IMR-90 (cell line): ENCODE measurements at regions of chr22 and their contacts with region 1.

Region 1: DNA sequence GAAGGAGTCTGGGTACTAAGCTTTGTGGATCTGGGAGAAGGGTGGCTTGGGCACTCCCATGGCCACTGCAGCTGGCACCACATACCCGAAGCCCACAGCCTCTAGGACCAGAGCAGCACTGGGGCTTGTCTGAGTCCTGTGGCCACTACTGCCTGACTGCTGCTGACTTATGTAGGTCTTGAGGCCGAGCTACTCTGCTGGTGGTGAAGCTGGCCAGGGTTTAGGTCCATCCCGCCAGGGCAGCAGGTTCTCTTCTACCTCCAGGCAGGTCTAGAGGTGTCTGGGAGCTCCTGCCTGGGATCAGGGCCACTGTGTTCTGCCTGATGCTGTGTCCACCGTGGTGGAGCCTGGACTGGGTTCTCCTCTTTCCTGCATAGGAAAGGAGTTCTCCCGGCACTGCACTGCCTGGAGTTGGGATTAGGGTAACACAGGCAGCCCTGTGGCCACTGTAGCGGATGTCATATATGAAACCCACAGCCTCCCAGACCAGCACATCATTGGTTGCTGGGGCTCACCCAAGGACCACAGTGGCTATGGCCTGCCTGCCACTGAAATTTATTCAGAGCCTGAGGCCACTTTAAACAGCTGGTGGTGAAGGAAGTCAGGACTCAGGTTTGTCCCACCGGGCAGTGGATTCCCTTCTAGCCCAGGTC is 109.8 kb upstream of the SERPIND1 start:
- DNase-seq: no peak
- ATAC-seq: no peak
- H3K4me3 ChIP-seq: no peak overlapping the region
- H3K27ac ChIP-seq: no peak overlapping the region
- H3K4me1 ChIP-seq: peaks cover 1% of the 10 kb centered on the region; the same call in 1 of the 2 replicates
- H3K27me3 ChIP-seq: peaks cover 1% of the 10 kb centered on the region; the same call in 1 of the 2 replicates
- CTCF ChIP-seq: no peak
- POLR2A ChIP-seq: no peak
- RAD21 ChIP-seq: no peak

Region 2: DNA sequence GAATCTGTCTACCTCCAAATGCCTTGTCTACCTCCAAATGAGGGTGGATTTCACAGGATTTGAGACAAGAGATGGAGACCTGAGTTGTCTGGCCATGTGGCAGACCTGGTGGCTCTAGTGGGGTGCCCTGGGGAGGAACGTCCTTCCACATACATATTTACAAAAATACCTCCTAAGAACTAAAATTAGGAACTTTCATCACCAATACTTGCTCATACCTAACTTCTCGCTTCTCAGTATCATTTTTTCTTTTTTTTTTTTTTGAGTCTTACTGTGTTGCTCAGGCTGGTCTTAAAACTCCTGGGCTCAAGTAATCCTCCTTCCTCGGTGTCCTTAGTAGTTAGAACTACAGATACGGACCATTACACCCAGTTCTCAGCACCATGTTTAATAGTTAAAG is 38.8 kb before region 1 on chr22:
- CTCF ChIA-PET with region 1: no interaction called
- POLR2A ChIA-PET with region 1: no interaction called
- dilution Hi-C with region 1: no loop called
- in situ Hi-C with region 1: no loop called
- intact Hi-C with region 1: loop called (anchors 5 kb)
- DNase-seq: no peak
- ATAC-seq: no peak
- H3K4me3 ChIP-seq: no peak overlapping the region
- H3K27ac ChIP-seq: no peak overlapping the region
- H3K4me1 ChIP-seq: no peaks in the 10 kb centered on the region
- H3K27me3 ChIP-seq: peaks cover 54% of the 10 kb centered on the region
- CTCF ChIP-seq: no peak
- POLR2A ChIP-seq: no peak
- RAD21 ChIP-seq: no peak